ENCODE measurements at regions of chr17 and their contacts with region 1.

Region 1: DNA sequence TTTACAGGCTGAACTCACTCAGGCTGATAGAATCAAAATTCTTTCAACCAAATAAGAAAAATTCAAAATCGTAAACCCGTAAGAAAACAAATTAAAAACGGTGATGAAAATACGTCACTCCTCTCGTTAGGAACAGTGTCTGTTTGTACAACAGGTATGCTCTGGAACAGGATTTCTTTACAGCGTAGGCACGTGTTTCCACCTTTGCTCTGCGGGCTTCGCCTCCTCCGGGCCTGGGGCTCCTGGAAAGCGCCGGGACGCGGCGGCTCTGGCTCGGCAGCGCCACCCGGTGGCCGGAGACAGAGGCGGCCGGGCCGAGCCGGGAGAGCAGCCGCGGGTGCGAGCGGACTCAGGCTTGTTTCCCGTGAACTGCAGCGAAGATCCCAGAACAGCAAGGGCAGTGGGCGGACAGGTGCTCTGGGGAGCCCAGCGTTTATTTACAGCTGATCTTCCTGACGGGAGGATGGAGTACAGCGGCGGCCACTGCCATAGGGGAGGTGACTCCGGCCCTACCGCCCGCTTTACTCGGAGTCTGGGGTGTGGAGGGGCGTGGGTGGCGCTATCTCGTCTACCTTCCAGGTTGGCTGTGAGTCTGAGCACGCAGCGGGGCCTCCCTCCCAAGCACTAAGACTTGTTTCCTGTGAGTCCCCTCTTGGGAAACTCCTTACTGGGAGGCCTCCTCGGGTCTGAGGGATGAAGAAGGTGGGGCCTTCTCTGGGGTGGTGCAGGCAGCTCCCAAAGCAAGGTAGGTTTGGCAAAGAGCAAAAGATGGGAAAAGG is 40.5 kb upstream of the ATP2A3 start:
- DNase-seq: peak; percentile 76 to 80 (median 78)
- ATAC-seq: peak; percentile 83
- H3K4me3 ChIP-seq: no peak overlapping the region
- H3K27ac ChIP-seq: peak overlapping the region; percentile 63; the same call in 2 of the 3 replicates
- H3K4me1 ChIP-seq: peaks cover 43 to 54% of the 10 kb centered on the region in 2 experiments
- H3K27me3 ChIP-seq: no peaks in the 10 kb centered on the region
- CTCF ChIP-seq: peak; percentile 85 to 93 (median 93)
- EP300 ChIP-seq: no peak
- POLR2A ChIP-seq: peak; percentile 47; the same call in 1 of the 2 replicates
- RAD21 ChIP-seq: peak; percentile 92 to 95

Region 2: DNA sequence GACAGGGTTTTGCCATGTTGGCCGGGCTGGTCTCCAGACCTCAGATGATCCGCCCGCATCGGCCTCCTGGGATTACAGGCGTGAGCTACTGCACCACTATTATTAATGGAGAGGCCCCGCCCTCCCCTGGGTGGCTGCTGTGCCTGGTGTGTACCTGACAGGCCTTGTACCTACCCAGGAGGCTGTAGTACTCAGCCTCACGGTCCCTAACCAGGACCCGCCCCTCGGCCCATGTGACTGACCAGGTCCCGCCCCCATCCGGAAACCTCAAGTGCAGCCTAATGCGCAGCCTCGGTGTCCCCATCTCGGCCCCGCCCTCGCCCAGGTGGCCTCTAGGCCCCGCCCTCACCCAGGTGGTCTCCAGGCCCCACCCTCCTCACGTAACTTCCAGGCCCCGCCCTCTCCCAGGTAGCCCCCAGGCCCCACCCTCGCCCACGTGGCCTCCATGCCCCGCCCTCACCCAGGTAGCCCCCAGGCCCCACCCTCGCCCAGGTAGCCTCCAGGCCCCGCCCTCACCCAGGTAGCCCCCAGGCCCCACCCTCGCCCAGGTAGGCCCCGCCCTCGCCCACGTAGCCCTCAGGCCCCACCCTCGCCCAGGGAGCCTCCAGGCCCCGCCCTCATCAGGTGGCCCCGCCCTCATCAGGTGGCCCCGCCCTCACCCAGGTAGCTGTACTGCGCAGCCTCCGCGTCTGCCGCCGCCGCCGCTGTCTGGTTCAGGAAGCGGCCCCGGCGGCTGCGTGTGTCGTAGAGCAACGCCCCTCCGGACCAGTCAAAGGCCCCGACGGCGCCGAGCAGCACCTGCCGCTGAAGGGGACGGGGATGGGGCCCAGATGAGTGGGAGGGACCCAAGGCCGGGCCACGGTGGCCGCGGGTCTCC is 250.0 kb before region 1 on chr17:
- CTCF ChIA-PET with region 1: no interaction called
- POLR2A ChIA-PET with region 1: no interaction called
- in situ Hi-C with region 1: no loop called
- intact Hi-C with region 1: no loop called
- DNase-seq: peak; percentile 82 to 94 (median 93)
- ATAC-seq: peak; percentile 95
- H3K4me3 ChIP-seq: peak overlapping the region; percentile 50
- H3K27ac ChIP-seq: peak overlapping the region; percentile 44
- H3K4me1 ChIP-seq: peaks cover 4 to 25% of the 10 kb centered on the region in 2 experiments; a peak in 4 of 5 replicates
- H3K27me3 ChIP-seq: peaks cover 0 to 16% of the 10 kb centered on the region in 2 experiments; a peak in 3 of 5 replicates
- CTCF ChIP-seq: no peak
- EP300 ChIP-seq: no peak
- POLR2A ChIP-seq: peak; percentile 64
- RAD21 ChIP-seq: no peak

Region 3: DNA sequence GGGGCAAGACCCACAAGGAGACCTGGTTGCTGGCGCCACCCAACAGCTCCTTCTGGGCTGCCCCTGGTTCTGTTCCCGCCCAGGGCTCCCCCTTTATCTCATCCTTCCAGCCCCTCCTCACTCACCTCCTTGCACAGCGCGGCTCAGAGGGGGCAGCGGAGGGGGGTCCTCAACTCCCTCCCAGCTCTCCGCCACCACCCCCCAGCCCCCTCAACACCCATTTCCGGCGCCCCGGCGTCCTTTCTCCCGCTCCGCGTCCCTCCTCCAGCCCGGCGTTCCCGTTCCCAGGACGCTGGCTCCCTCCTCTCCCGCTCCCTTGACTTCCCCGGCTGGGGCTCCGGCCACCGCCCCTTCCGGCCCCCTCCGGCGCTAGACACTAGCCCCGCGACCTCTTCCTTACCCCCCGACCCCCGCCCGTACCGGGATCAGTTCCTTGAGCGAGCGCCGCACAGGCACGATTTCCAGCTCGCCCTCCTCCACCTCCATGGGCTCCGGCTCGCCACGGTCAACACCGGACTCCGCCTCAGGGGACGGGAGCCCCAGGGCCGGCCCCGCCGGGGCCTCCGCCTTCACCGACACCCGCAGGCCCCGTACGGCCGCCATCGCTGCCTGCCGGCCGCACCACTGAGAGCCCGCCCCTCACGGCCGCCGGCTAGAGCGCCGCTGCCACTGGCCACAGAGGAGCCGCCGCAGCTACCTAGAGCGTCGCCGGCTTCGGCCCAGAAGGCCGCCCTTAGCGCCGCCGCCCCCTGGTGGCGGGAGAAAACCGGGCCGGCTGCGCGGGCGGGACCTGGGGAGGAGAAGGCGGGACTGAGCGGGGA is 158.9 kb before region 1 on chr17 and contains the start of gene NCBP3:
- CTCF ChIA-PET with region 1: no interaction called
- POLR2A ChIA-PET with region 1: no interaction called
- in situ Hi-C with region 1: no loop called
- intact Hi-C with region 1: loop called (anchors 10 kb)
- DNase-seq: peak; percentile 90 to 92 (median 92)
- ATAC-seq: peak; percentile 97
- H3K4me3 ChIP-seq: peak within 1 kb of the TSS; percentile 99
- H3K27ac ChIP-seq: peak within 1 kb of the TSS; percentile 83
- H3K4me1 ChIP-seq: peaks cover 2 to 8% of the 10 kb centered on the region in 2 experiments; a peak in 4 of 5 replicates
- H3K27me3 ChIP-seq: 0 out of 5 replicates have a peak, but pooled peaks cover 0 to 2% of the 10 kb centered on the region in 2 experiments
- CTCF ChIP-seq: peak; percentile 79 to 89 (median 86)
- EP300 ChIP-seq: peak; percentile 51; the same call in 1 of the 2 replicates
- POLR2A ChIP-seq: peak; percentile 89
- RAD21 ChIP-seq: no peak
- polyA plus RNA-seq, gene NCBP3: 3.1 to 5.8 TPM

Region 4: GRCh38 chr17:3913531-3914311 is 91.0 kb before region 1 on chr17:
- CTCF ChIA-PET with region 1: interaction called, 19 read pairs
- POLR2A ChIA-PET with region 1: interaction called, 6 read pairs
- in situ Hi-C with region 1: loop called (anchors 10 kb)
- intact Hi-C with region 1: loop called (anchors 2 kb)
- DNase-seq: peak; percentile 65 to 80 (median 71)
- ATAC-seq: peak; percentile 79
- H3K4me3 ChIP-seq: peak overlapping the region; percentile 55
- H3K27ac ChIP-seq: peak overlapping the region; percentile 81; the same call in 2 of the 3 replicates
- H3K4me1 ChIP-seq: peaks cover 32 to 46% of the 10 kb centered on the region in 2 experiments
- H3K27me3 ChIP-seq: no peaks in the 10 kb centered on the region
- CTCF ChIP-seq: peak; percentile 84 to 92 (median 87)
- EP300 ChIP-seq: no peak
- POLR2A ChIP-seq: no peak
- RAD21 ChIP-seq: peak; percentile 52 to 79; a peak in 3 of 4 replicates

Region 5: DNA sequence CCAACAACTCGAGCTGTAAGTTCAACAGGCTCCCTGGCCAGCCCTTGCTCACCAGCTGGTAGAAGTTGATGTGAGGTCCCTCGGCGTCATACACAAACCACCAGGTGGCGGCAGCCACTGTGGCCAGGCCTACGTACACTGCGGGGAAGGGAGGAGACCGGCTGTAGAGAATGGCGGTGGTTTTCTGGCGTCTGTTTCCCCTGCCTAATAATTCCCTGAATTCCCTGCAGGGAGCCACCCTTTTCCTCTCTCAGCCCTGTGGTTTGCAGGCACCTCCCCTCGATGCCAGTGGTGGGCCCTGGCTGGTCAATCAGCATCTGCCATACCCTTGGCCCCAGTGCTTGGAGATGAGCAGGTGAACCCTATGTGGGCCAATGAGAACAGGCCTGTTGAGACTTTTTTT is 69.6 kb before region 1 on chr17:
- CTCF ChIA-PET with region 1: interaction called, 4 read pairs
- POLR2A ChIA-PET with region 1: no interaction called
- in situ Hi-C with region 1: no loop called
- intact Hi-C with region 1: loop called (anchors 2 kb)
- DNase-seq: peak in 3 of 4 experiments; percentile 41 to 70 (median 45)
- ATAC-seq: peak; percentile 90
- H3K4me3 ChIP-seq: no peak overlapping the region
- H3K27ac ChIP-seq: no peak overlapping the region
- H3K4me1 ChIP-seq: peaks cover 2 to 4% of the 10 kb centered on the region in 2 experiments; a peak in 2 of 5 replicates
- H3K27me3 ChIP-seq: no peaks in the 10 kb centered on the region
- CTCF ChIP-seq: peak; percentile 59 to 69 (median 59)
- EP300 ChIP-seq: no peak
- POLR2A ChIP-seq: no peak
- RAD21 ChIP-seq: peak in 1 of 2 experiments; percentile 56; a peak in 2 of 4 replicates

Region 6: DNA sequence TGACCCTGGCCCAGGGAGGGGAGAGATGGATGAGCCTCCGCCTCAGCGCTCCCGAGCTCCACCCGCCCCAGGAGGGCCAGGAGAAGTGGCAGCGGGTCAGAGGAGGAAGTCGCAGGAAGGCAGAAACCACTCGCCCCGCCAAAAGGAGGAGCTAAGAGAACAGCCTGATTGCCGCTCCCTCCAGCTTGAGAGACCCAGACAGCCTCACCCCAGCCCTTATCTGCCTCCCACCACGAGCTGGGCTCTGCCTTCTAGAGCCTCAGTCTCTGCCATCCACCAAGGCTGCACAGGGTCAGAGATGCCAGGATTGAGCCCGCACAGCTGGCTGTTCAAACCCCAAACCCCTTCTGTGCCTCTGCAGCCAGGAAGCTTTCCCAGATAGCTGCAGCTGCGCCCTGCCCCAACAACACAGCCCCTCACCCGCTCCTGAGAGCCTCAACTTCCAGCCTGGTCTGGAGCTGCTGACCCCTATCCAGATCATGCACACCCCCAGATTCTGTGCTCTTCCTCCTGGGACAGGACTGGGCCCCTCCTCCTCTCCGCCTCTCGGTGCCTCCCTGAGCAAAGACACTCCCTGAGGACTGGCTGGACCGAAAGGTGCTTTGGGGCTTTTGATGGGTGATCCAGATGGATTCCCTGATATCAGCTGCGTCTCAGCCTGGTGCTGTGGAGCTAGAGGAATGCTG is 39.4 kb before region 1 on chr17:
- CTCF ChIA-PET with region 1: interaction called, 4 read pairs
- POLR2A ChIA-PET with region 1: interaction called, 4 read pairs
- in situ Hi-C with region 1: no loop called
- intact Hi-C with region 1: loop called (anchors 1 kb)
- DNase-seq: peak; percentile 66 to 91 (median 74)
- ATAC-seq: peak; percentile 87
- H3K4me3 ChIP-seq: peak overlapping the region; percentile 73
- H3K27ac ChIP-seq: peak overlapping the region; percentile 88; the same call in 2 of the 3 replicates
- H3K4me1 ChIP-seq: peaks cover 37 to 73% of the 10 kb centered on the region in 2 experiments
- H3K27me3 ChIP-seq: no peaks in the 10 kb centered on the region
- CTCF ChIP-seq: peak in 2 of 3 experiments; percentile 39 to 48; a peak in 4 of 6 replicates
- EP300 ChIP-seq: no peak
- POLR2A ChIP-seq: peak; percentile 69
- RAD21 ChIP-seq: peak; percentile 25 to 59; a peak in 3 of 4 replicates

Region 7: GRCh38 chr17:4017377-4017776 is 12.7 kb after region 1 on chr17:
- CTCF ChIA-PET with region 1: no interaction called
- POLR2A ChIA-PET with region 1: interaction called, 11 read pairs
- in situ Hi-C with region 1: no loop called
- intact Hi-C with region 1: no loop called
- DNase-seq: peak; percentile 20 to 29 (median 26)
- ATAC-seq: peak; percentile 83
- H3K4me3 ChIP-seq: no peak overlapping the region
- H3K27ac ChIP-seq: no peak overlapping the region
- H3K4me1 ChIP-seq: no peaks in the 10 kb centered on the region; a peak in 2 of 5 replicates
- H3K27me3 ChIP-seq: no peaks in the 10 kb centered on the region
- CTCF ChIP-seq: peak; percentile 46 to 65 (median 48); a peak in 5 of 6 replicates
- EP300 ChIP-seq: no peak
- POLR2A ChIP-seq: no peak
- RAD21 ChIP-seq: no peak

Region 8: GRCh38 chr17:4050971-4051370 is 46.3 kb after region 1 on chr17:
- CTCF ChIA-PET with region 1: no interaction called
- POLR2A ChIA-PET with region 1: no interaction called
- in situ Hi-C with region 1: no loop called
- intact Hi-C with region 1: no loop called
- DNase-seq: no peak
- ATAC-seq: no peak
- H3K4me3 ChIP-seq: no peak overlapping the region
- H3K27ac ChIP-seq: no peak overlapping the region
- H3K4me1 ChIP-seq: no peaks in the 10 kb centered on the region; a peak in 1 of 5 replicates
- H3K27me3 ChIP-seq: no peaks in the 10 kb centered on the region
- CTCF ChIP-seq: no peak
- EP300 ChIP-seq: no peak
- POLR2A ChIP-seq: no peak
- RAD21 ChIP-seq: no peak

Region 9: GRCh38 chr17:4087906-4088693 is 83.4 kb after region 1 on chr17:
- CTCF ChIA-PET with region 1: no interaction called
- POLR2A ChIA-PET with region 1: no interaction called
- in situ Hi-C with region 1: no loop called
- intact Hi-C with region 1: no loop called
- DNase-seq: no peak
- ATAC-seq: no peak
- H3K4me3 ChIP-seq: no peak overlapping the region
- H3K27ac ChIP-seq: no peak overlapping the region
- H3K4me1 ChIP-seq: no peaks in the 10 kb centered on the region
- H3K27me3 ChIP-seq: no peaks in the 10 kb centered on the region
- CTCF ChIP-seq: no peak
- EP300 ChIP-seq: no peak
- POLR2A ChIP-seq: no peak
- RAD21 ChIP-seq: no peak

Measured in K562 (cell line).